Transverse colon (tissue), 4 donors: ENCODE measurements at regions of chr7 and their contacts with region 1.

Region 1: DNA sequence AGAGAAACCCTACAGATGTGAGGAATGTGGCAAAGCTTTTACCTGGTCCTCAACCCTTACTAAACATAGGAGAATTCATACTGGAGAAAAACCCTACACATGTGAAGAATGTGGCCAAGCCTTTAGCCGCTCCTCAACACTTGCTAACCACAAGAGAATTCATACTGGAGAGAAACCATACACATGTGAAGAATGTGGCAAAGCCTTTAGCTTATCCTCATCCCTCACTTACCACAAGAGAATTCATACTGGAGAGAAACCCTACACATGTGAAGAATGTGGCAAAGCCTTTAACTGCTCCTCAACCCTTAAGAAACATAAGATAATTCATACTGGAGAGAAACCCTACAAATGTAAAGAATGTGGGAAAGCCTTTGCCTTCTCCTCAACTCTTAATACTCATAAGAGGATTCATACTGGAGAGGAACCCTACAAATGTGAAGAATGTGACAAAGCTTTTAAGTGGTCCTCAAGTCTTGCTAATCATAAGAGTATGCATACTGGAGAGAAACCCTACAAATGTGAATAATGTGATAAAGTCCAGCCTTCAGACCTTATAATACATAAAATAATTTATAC is 38.2 kb downstream of the ZNF679 start:
- DNase-seq: no peak
- H3K4me3 ChIP-seq: no peak overlapping the region
- H3K27ac ChIP-seq: no peak overlapping the region
- H3K4me1 ChIP-seq: no peaks in the 10 kb centered on the region
- H3K27me3 ChIP-seq: no peaks in the 10 kb centered on the region
- CTCF ChIP-seq: no peak
- EP300 ChIP-seq: no peak
- POLR2A ChIP-seq: no peak

Region 2: DNA sequence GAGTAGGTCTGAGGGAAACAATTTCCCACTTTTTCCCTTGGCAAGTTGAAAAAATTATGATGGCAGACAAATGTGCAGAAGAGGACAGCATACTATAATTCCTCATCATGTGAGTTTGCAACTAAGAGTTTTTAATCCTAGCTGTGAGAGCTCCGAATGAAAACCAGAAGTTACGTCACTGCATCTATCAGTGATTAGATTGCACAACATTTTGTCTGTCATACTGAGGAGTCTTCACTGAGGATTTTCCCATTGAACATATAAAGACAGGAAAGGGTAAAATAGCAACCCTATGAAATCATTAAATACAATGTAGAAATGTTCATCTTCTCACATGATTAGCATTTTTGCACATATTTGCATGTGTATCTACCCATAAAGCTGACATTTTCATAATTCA is 93.1 kb after region 1 on chr7:
- in situ Hi-C with region 1: loop called in 1 of 4 experiments (anchors 25 kb)
- intact Hi-C with region 1: no loop called
- DNase-seq: no peak
- H3K4me3 ChIP-seq: no peak overlapping the region
- H3K27ac ChIP-seq: no peak overlapping the region
- H3K4me1 ChIP-seq: no peaks in the 10 kb centered on the region
- H3K27me3 ChIP-seq: no peaks in the 10 kb centered on the region
- CTCF ChIP-seq: no peak
- EP300 ChIP-seq: no peak
- POLR2A ChIP-seq: no peak

Region 3: GRCh38 chr7:64872351-64873154 is 606.1 kb after region 1 on chr7:
- in situ Hi-C with region 1: no loop called
- intact Hi-C with region 1: no loop called
- DNase-seq: no peak
- H3K4me3 ChIP-seq: no peak overlapping the region
- H3K27ac ChIP-seq: no peak overlapping the region
- H3K4me1 ChIP-seq: peaks cover 0 to 4% (median 0%) of the 10 kb centered on the region in 4 donors
- H3K27me3 ChIP-seq: no peaks in the 10 kb centered on the region
- CTCF ChIP-seq: no peak
- EP300 ChIP-seq: no peak
- POLR2A ChIP-seq: no peak